ENCODE measurements at regions of chr15 and their contacts with region 1.

Region 1: DNA sequence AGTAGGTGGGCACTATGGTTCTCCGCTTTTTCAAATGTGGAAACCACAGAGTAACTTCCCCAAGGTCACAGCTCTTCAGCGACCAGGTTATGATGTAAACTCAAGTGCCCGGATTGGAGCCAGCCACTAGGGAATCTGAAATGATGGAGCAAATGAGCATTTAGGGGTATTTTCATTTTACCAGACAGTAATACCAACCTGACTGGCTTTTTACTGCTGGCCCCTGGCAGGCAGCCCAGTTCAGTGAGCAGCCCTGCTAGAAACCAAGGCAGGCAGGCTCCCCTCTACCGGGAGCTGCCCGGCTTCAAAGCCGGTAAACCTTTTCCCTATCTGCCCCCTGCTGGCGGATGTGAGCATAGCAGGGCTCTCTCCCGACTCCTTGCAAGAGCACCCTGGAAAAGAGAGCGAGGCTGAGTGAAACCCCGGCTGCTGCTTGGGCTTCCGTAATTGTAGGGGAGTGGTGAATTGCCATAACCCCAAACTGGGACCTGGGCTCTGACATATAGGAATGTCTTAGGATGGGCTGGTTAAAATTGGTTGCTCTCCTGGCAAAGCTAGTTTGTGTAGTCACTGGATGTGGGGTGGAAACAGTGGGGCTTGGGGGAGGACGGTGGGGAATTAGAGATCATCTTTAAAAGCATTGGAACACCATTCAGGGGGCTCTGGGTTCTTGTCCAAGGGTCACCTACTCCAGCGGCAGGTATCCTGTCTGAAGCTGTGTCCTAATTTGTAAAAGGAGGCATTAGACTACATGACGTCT is 98.0 kb upstream of the TNFAIP8L3 start:
- DNase-seq: peak; percentile 76
- CTCF ChIP-seq: peak; percentile 89

Region 2: DNA sequence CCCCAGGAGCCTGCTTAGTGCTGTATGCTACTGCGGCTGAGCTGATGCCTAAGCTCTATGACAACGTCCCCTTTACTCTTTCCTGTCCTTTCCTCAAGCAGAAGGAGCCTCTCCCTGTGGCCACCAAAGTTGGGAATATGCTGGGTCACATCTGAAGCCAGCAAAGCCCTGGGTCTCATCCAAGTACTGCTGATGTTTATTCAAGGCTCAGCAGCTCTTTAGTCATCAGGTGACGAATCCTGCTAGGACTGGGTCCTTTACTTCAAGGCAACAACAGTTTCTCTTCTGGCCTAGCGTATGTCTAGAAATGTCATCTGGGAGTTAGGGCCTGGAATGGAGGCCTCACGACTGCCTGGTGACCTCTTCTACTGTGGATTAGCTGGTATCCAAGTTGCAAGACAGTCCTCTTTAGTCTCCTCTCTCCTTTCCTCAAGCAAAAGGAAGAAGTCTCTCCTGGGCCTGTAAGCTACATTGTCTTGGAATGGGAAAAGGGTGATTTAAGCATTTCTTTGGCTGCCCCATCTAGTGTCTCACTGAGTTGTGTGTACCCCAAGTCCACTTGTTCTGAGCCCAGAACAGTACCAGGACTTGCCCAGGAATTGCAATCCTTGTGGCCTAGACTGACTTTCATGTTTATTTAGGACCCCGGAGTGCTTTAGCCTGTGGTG is 161.9 kb before region 1 on chr15:
- CTCF ChIA-PET with region 1: no interaction called
- POLR2A ChIA-PET with region 1: no interaction called
- DNase-seq: no peak
- CTCF ChIP-seq: no peak

Region 3: DNA sequence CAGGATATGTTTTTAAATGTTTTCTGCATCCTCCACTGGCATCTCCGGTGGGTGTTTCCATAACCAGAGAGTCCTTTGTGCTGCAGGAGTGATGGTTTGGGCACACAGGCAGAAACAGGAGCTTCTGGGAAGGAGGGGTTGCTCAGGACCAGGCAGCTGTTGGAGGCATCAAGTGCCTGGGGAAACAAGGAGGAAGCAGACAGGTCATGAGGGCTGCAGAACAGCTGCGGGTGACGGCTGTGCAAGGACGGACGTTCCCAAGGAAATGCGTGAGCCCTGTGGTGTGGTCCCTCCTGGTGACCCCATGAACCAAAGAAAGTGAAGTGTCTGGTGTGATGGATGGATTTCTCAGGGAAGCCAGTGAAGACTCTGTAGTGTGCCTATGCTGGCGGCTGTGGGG is 36.8 kb before region 1 on chr15:
- CTCF ChIA-PET with region 1: interaction called, 78 read pairs
- POLR2A ChIA-PET with region 1: no interaction called
- DNase-seq: no peak
- CTCF ChIP-seq: no peak

Region 4: GRCh38 chr15:51203797-51204196 is 11.1 kb after region 1 on chr15:
- CTCF ChIA-PET with region 1: interaction called, 66 read pairs
- POLR2A ChIA-PET with region 1: no interaction called
- DNase-seq: no peak
- CTCF ChIP-seq: no peak

Region 5: DNA sequence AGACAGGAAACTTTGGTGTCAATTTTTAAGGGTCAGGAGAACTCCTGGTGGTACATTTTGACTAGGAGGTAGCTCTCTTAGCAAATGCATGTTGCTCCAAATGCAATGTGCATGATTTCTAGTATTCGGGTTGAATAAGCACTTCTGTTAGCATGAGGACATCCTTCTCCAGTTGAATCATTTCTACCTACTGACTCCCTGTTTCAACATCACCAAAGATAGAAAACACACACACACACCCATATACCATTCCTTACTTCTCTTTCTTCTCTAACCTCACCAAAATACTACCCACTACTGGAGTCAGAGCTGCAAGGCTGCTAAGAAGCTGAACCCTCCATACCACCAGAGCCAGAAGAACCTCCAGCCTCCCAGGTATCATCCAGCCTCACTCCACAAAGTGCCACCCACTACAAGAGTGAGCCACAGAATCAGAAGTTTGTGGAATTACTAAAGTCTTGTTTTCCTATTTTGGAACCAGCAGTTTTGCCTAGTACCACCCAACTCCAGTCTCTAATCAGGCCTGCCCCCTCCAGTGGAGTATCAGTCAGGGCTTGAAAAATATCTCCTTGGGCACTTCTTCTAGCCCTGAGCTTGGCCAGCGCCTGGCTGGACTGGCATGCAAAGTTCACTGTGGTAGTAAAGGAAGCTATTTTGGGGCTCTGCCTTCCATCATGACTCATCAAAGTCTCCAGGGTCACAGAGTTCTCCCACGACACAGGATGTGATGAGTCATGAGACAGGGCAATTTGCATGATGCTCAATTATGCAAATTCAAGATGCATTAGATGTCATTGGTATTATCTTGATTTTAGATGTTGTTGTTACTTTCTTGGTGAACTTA is 35.5 kb after region 1 on chr15:
- CTCF ChIA-PET with region 1: interaction called, 32 read pairs
- POLR2A ChIA-PET with region 1: interaction called, 5 read pairs
- DNase-seq: peak; percentile 72
- CTCF ChIP-seq: no peak

Region 6: DNA sequence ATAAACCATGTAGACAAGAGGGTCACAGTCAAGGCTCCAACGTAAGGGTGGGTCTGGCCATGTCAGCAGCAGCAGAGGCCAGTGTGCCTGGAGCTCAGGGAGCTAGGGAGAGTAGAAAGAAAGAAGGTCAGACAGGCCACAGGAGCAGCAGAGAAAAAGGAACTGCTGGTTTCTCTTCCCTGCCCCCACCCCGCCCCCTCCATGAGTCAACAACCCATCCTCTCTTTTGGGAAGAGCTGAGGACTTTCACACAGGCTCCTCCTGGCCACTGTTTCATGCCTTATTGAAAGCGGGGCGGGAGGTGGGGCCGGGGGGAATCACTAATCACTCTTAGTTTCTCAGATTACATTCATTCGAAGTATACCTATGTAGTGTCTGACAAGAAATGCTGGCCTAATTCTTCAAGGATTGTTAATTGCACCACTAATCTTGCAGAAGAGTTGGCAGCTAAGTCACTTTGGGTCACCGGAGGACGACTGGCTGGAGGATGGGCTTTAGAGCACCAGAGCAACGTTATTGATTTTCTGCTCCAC is 479.5 kb after region 1 on chr15:
- CTCF ChIA-PET with region 1: no interaction called
- POLR2A ChIA-PET with region 1: no interaction called
- DNase-seq: no peak
- CTCF ChIP-seq: no peak

Measured in GM10248 (cell line).